ENCODE measurements at regions of chr20 and their contacts with region 1.

Region 1: GRCh38 chr20:32731393-32732266 is 11.6 kb downstream of the COMMD7 start:
- DNase-seq: peak; percentile 69
- H3K4me3 Mint-ChIP-seq: peak overlapping the region; percentile 45
- H3K27ac Mint-ChIP-seq: peak overlapping the region; percentile 86
- H3K4me1 Mint-ChIP-seq: peaks cover 27% of the 10 kb centered on the region
- H3K27me3 Mint-ChIP-seq: no peaks in the 10 kb centered on the region
- CTCF ChIP-seq: no peak

Region 2: GRCh38 chr20:32743237-32744112 is 11.8 kb after region 1 on chr20 and contains the start of gene COMMD7:
- CTCF ChIA-PET with region 1: interaction called, 11 read pairs
- intact Hi-C with region 1: no loop called
- DNase-seq: peak; percentile 76
- H3K4me3 Mint-ChIP-seq: peak within 1 kb of the TSS; percentile 94
- H3K27ac Mint-ChIP-seq: peak within 1 kb of the TSS; percentile 81
- H3K4me1 Mint-ChIP-seq: peaks cover 23% of the 10 kb centered on the region
- H3K27me3 Mint-ChIP-seq: no peaks in the 10 kb centered on the region
- CTCF ChIP-seq: no peak
- total RNA-seq, gene COMMD7: 51.0 and 56.0 TPM in 2 replicates

Region 3: GRCh38 chr20:32762149-32762753 is 30.6 kb after region 1 on chr20 and contains the start of gene DNMT3B:
- CTCF ChIA-PET with region 1: interaction called, 3 read pairs
- intact Hi-C with region 1: loop called (anchors 2 kb)
- DNase-seq: peak; percentile 92
- H3K4me3 Mint-ChIP-seq: peak within 1 kb of the TSS; percentile 93
- H3K27ac Mint-ChIP-seq: peak within 1 kb of the TSS; percentile 86
- H3K4me1 Mint-ChIP-seq: peaks cover 27% of the 10 kb centered on the region
- H3K27me3 Mint-ChIP-seq: no peaks in the 10 kb centered on the region
- CTCF ChIP-seq: no peak
- total RNA-seq, gene DNMT3B: 8.4 and 10.8 TPM in 2 replicates

Measured in Calu3 (cell line).